Kidney (tissue), 22 donors: ENCODE measurements at regions of chr20 and their contacts with region 1.

Region 1: DNA sequence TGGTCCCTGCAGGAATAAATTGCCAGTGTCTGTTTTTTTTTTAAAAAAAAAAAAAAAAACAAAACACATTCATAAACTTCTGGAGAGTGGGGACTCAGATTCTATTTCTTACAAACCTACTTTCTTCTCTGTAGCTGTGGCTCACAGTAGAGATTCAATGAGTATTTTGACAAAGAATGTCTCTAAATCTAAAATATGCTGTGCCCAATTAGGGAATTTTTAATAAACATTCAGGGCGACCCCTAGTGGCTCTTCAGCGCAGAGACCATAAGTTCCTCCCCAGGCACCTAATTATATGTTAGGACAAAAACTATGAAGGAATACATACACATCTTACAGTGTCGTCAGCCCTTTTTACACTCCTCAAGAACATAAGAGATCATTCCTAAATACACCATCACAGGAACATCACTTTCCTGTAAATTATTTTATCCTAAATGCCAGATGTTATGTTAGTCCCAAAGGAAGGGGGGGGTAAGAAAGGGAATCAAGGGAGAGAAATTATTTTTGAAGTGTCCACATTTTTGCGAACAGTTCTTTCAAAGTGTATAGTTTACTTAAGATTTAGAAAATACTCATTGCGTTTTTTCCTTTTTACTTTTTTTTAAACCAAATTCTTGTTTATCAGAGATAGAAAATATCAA is 21.8 kb upstream of the NAA20 start:
- DNase-seq: peak in 2 of 5 donors; percentile 51 to 76
- H3K4me3 ChIP-seq: no peak overlapping the region
- H3K27ac ChIP-seq: no peak overlapping the region
- H3K4me1 ChIP-seq: peaks cover 7 to 51% (median 34%) of the 10 kb centered on the region in 3 donors
- H3K27me3 ChIP-seq: no peaks in the 10 kb centered on the region
- CTCF ChIP-seq: peak; percentile 73

Region 2: GRCh38 chr20:19692685-19693119 is 302.6 kb before region 1 on chr20:
- intact Hi-C with region 1: loop called (anchors 10 kb)
- DNase-seq: peak in 4 of 5 donors; percentile 56 to 70 (median 66)
- H3K4me3 ChIP-seq: peak overlapping the region in 2 of 3 donors; percentile 35 to 40
- H3K27ac ChIP-seq: no peak overlapping the region
- H3K4me1 ChIP-seq: peaks cover 0 to 4% (median 0%) of the 10 kb centered on the region in 3 donors
- H3K27me3 ChIP-seq: no peaks in the 10 kb centered on the region
- CTCF ChIP-seq: peak; percentile 90

Region 3: DNA sequence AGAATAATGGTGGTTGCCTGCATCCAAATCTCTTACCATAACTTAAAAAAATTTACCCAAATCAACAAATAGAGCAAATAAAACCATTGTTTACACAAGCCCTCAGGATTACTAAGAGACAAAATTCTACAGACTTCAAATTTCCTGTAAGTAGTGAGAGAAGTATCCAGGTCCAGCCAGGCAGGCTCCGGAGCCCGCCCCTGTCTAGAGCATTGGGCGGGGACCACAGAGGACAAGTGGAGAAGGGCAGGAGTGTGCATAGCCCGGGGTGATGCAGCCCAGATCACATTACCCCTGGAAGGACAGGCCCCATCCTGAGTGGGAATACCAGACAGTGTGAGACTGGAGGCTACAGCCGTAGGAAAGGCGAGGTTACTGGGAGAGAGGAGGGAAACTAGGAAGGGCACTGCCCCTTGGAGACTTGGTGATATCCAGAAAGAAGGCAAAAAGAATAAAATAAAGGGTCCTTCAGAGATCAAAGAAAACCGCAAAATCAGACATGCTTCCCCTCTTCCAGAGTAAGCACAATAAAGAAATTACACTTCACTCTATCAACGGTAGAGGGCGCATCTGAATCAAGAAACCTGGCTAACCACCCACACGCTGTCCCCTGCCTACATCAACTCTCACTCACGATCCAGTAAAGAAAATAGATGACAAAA is 210.7 kb before region 1 on chr20:
- intact Hi-C with region 1: loop called (anchors 10 kb)
- DNase-seq: peak; percentile 68 to 94 (median 80)
- H3K4me3 ChIP-seq: no peak overlapping the region
- H3K27ac ChIP-seq: no peak overlapping the region
- H3K4me1 ChIP-seq: peaks cover 4 to 24% (median 12%) of the 10 kb centered on the region in 3 donors
- H3K27me3 ChIP-seq: no peaks in the 10 kb centered on the region
- CTCF ChIP-seq: peak; percentile 81